CD4-positive, alpha-beta memory T cell (primary cell): ENCODE measurements at regions of chr3 and their contacts with region 1.

Region 1: GRCh38 chr3:158313338-158313927 is 203.5 kb downstream of the RSRC1 start:
- DNase-seq: peak in 1 of 5 donors; percentile 7
- H3K4me3 ChIP-seq: no peak overlapping the region
- H3K4me3 Mint-ChIP-seq: no peak overlapping the region
- H3K27ac ChIP-seq: no peak overlapping the region
- H3K27ac Mint-ChIP-seq: no peak overlapping the region
- H3K4me1 ChIP-seq: no peaks in the 10 kb centered on the region
- H3K4me1 Mint-ChIP-seq: no peaks in the 10 kb centered on the region
- H3K27me3 ChIP-seq: no peaks in the 10 kb centered on the region
- H3K27me3 Mint-ChIP-seq: no peaks in the 10 kb centered on the region

Region 2: DNA sequence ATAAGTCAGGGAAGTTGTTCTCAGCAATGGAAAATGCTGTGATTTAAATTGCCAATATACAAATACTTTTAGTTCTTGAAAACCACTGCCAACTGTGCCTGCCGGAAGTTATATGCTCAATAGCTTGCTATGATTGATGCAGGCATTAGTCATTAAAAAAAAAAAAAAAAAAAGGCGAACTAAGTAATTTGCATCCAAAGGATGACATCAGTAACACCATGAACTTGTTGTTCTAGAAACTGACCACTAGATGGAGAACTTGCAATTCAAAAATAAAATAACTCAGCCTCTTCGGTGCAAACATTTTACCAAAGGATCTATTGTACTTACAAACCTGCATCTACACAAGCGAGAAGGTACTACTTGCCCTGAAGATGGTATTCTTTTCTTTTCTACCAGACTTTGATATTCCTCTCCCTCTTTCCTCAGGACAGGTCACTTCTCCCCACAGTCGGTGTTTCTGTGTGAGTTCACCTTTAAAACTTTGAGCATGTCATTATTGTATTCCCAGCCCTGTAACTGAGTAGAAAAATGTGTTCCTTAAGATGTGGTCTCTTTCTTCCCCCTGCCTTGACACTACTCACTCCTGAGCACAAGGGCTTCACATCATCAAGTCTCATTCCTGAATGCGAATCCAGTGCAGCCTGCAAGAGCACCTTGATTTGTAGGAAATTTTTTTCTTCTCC is 695.2 kb before region 1 on chr3:
- CTCF ChIA-PET with region 1: no interaction called
- POLR2A ChIA-PET with region 1: no interaction called
- intact Hi-C with region 1: loop called (anchors 2 kb)
- DNase-seq: peak in 4 of 5 donors; percentile 28 to 47 (median 44)
- H3K4me3 ChIP-seq: no peak overlapping the region
- H3K4me3 Mint-ChIP-seq: peak overlapping the region in 1 of 8 donors; percentile 24
- H3K27ac ChIP-seq: no peak overlapping the region
- H3K27ac Mint-ChIP-seq: peak overlapping the region in 1 of 7 donors; percentile 33
- H3K4me1 ChIP-seq: peaks cover 7% of the 10 kb centered on the region
- H3K4me1 Mint-ChIP-seq: peaks cover 3 to 6% (median 4%) of the 10 kb centered on the region in 4 donors
- H3K27me3 ChIP-seq: no peaks in the 10 kb centered on the region
- H3K27me3 Mint-ChIP-seq: peaks cover 9 to 11% of the 10 kb centered on the region in 2 donors